ENCODE measurements at regions of chr12 and their contacts with region 1.

Region 1: DNA sequence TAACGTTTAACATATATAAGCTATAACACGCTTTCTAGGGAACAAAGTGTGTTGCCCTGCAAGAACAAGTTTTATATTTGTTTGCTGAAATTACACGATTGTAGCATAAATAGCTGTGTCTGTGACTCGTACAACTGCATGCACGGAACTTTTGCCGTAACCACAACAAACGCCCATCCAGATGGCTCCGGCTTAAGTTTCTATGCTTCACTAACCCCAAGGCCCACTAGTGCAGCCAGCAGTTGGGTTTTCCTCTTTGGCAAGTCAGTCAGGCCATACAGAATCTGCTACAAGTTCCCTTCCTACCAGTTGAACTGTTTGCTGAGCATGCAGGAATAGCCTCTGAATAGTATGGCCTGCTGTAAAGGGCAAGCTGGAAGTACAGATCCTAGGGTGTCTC is 12.1 kb downstream of the CSRP2 start:
- DNase-seq: no peak
- H3K4me3 ChIP-seq: no peak overlapping the region
- H3K27ac ChIP-seq: no peak overlapping the region
- H3K4me1 ChIP-seq: no peaks in the 10 kb centered on the region
- H3K27me3 ChIP-seq: no peaks in the 10 kb centered on the region
- CTCF ChIP-seq: no peak

Region 2: GRCh38 chr12:77060136-77060882 is 193.6 kb after region 1 on chr12:
- CTCF ChIA-PET with region 1: interaction called, 13 read pairs
- POLR2A ChIA-PET with region 1: no interaction called
- intact Hi-C with region 1: no loop called
- DNase-seq: no peak
- H3K4me3 ChIP-seq: no peak overlapping the region
- H3K27ac ChIP-seq: no peak overlapping the region
- H3K4me1 ChIP-seq: peaks cover 11% of the 10 kb centered on the region
- H3K27me3 ChIP-seq: no peaks in the 10 kb centered on the region
- CTCF ChIP-seq: no peak

Measured in PC-9 (cell line).